Naive thymus-derived CD4-positive, alpha-beta T cell (primary cell): ENCODE measurements at regions of chr6 and their contacts with region 1.

Region 1: GRCh38 chr6:68718385-68719073 is 83.4 kb downstream of the ADGRB3 start:
- DNase-seq: no peak
- ATAC-seq: no peak
- H3K4me3 ChIP-seq: no peak overlapping the region
- H3K4me3 Mint-ChIP-seq: no peak overlapping the region
- H3K27ac ChIP-seq: no peak overlapping the region
- H3K27ac Mint-ChIP-seq: no peak overlapping the region
- H3K4me1 ChIP-seq: no peaks in the 10 kb centered on the region
- H3K4me1 Mint-ChIP-seq: no peaks in the 10 kb centered on the region
- H3K27me3 ChIP-seq: no peaks in the 10 kb centered on the region
- H3K27me3 Mint-ChIP-seq: peaks cover 0 to 9% (median 0%) of the 10 kb centered on the region in 5 donors

Region 2: DNA sequence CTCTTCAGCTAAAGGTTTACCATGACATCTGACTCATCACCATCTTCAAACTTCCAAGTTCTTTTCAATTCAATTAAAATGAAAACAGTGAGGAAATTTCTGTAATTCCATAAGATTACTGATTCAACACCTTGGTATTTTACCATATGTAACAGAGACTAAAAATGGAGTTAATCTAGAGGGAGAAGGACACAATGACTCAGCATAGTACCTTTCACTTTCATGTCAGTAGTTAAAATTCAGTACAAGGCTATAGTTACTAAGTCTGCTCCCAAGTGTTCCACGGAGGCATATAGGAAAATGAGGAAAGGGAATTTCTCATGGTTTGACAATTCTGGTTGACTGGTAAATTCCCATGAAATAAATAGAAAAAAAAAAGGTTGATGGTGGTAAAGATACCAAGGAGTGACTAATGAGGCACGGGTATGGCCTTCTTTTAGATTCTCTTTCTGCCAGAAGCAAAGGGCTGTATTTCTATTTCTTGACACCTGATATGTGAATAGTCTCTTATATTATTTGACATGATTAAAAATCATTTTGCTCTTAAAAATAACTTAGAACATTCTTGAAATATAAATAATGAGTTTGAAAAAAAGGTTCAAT is 610.2 kb before region 1 on chr6:
- CTCF ChIA-PET with region 1: no interaction called
- POLR2A ChIA-PET with region 1: no interaction called
- intact Hi-C with region 1: no loop called
- DNase-seq: no peak
- ATAC-seq: no peak
- H3K4me3 ChIP-seq: no peak overlapping the region
- H3K4me3 Mint-ChIP-seq: no peak overlapping the region
- H3K27ac ChIP-seq: no peak overlapping the region
- H3K27ac Mint-ChIP-seq: no peak overlapping the region
- H3K4me1 ChIP-seq: no peaks in the 10 kb centered on the region
- H3K4me1 Mint-ChIP-seq: no peaks in the 10 kb centered on the region
- H3K27me3 ChIP-seq: no peaks in the 10 kb centered on the region
- H3K27me3 Mint-ChIP-seq: no peaks in the 10 kb centered on the region

Region 3: GRCh38 chr6:68689910-68690309 is 28.6 kb before region 1 on chr6:
- CTCF ChIA-PET with region 1: no interaction called
- POLR2A ChIA-PET with region 1: no interaction called
- intact Hi-C with region 1: loop called in 1 of 2 experiments (anchors 1 kb)
- DNase-seq: no peak
- ATAC-seq: no peak
- H3K4me3 ChIP-seq: no peak overlapping the region
- H3K4me3 Mint-ChIP-seq: no peak overlapping the region
- H3K27ac ChIP-seq: no peak overlapping the region
- H3K27ac Mint-ChIP-seq: no peak overlapping the region
- H3K4me1 ChIP-seq: no peaks in the 10 kb centered on the region
- H3K4me1 Mint-ChIP-seq: no peaks in the 10 kb centered on the region
- H3K27me3 ChIP-seq: no peaks in the 10 kb centered on the region
- H3K27me3 Mint-ChIP-seq: peaks cover 0 to 5% (median 0%) of the 10 kb centered on the region in 5 donors